ENCODE measurements at regions of chr5 and their contacts with region 1.

Region 1: GRCh38 chr5:56838409-56839039 is 23.2 kb downstream of the MAP3K1 start:
- DNase-seq: peak; percentile 42
- H3K27ac ChIP-seq: no peak overlapping the region
- CTCF ChIP-seq: peak; percentile 67

Region 2: DNA sequence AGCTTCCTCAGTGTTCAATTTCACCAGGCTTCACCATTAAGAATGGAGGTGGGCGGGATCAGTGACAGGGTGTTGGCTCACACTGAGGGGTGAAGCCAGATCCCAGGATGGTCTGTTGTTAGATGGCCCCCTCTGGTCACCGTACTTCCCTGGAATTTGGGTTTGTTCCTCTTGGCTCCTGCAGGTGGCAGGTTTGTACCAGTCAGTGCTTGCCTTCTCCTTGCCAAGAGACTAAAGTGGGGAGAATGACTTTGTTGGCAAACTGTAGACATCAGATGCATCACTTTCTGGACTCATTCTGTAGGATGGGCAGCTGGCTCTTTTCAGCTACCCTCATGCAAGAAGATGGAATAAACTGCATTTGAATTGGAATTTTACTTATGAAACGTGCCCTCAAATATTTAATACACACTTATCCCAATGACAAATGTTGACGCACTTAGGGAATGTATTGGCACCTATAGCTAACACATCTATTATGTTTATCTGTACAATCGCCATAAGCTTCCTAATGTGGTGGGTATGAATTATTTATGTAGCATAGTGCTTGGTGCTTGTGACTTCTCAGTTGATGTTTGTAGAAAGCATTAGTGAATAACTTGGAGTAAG is 574.0 kb before region 1 on chr5:
- CTCF ChIA-PET with region 1: interaction called, 49 read pairs
- POLR2A ChIA-PET with region 1: no interaction called
- DNase-seq: peak; percentile 61
- H3K27ac ChIP-seq: no peak overlapping the region
- CTCF ChIP-seq: peak; percentile 80

Region 3: GRCh38 chr5:56270568-56271392 is 567.7 kb before region 1 on chr5:
- CTCF ChIA-PET with region 1: interaction called, 49 read pairs
- POLR2A ChIA-PET with region 1: no interaction called
- DNase-seq: peak; percentile 84
- H3K27ac ChIP-seq: no peak overlapping the region
- CTCF ChIP-seq: peak; percentile 100

Region 4: DNA sequence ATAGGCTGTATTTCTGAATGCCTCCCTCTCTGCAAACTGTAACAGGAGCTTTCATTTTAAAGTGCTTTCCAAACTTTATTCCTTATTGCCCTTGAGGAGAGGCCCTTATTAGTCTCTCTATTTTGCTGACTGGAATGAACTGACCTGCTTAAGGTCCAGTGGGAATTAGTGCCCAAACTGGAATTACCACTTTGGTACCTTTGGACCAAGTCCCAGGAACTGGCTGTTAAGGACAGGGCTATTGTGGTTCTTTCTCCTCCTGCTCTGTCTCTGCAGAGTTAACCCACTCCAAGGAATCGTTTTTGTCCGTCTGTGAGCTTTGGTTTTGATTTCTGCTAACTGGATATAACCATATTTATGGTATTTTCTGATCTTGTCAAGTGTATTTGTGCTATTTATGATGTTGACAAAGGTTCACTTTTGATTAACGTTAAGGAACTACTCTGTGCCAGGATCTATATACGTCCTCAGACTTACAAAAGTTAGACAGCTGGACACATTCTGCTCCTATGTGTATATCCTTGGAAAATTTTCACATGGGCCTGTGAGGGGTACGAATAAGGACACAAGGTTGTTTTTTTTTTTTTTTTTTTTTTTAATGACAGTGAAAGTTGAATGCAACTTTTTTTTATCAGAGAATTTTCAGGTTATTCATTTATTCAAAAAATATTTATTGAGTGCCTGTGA is 416.3 kb before region 1 on chr5:
- CTCF ChIA-PET with region 1: no interaction called
- POLR2A ChIA-PET with region 1: no interaction called
- DNase-seq: peak; percentile 53
- H3K27ac ChIP-seq: no peak overlapping the region
- CTCF ChIP-seq: no peak

Measured in RWPE1 (cell line).